Colonic mucosa (tissue), 4 donors: ENCODE measurements at regions of chr2 and their contacts with region 1.

Region 1: DNA sequence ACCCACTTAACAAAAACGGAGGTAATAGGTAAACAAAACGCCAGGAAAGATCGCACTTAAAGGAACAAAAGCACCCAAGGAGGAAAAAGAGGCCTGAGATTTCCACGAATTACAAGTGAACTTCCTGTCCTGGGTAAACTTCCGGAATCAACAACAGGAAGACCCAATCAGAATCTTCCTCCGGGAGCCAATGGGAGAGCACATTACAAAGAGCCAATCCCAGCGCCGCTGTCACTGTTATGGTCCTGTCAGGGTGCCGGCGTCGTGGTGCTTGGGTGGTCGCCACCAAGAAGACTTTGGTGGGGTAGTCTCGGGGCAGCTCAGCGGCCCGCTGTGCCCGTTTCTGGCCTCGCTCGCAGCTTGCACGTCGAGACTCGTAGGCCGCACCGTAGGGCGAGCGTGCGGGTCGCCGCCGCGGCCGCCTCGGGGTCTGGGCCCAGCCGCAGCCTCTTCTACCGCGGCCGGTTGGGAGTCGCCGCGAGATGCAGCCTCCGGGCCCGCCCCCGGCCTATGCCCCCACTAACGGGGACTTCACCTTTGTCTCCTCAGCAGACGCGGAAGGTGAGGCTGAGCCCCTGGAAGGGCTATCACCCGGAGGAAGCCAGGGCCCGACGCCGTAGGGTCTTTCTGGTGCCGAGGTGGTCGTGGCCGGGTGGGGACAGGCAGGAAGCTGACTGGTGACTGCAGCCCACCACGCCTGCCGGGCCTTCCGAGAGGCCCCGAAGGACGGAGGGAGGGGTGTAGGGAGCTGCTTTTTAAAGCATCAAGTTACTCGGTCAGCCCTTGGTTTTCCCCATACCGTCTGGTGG is at the start of gene YIPF4:
- DNase-seq: peak; percentile 93
- H3K4me3 ChIP-seq: peak within 1 kb of the TSS; percentile 86
- H3K27ac ChIP-seq: peak within 1 kb of the TSS; percentile 78
- H3K4me1 ChIP-seq: no peaks in the 10 kb centered on the region
- H3K27me3 ChIP-seq: no peaks in the 10 kb centered on the region
- CTCF ChIP-seq: no peak
- total RNA-seq, gene YIPF4: 47.3 to 82.8 TPM

Region 2: GRCh38 chr2:32168513-32168912 is 109.4 kb before region 1 on chr2:
- intact Hi-C with region 1: loop called (anchors 10 kb)
- DNase-seq: no peak
- H3K4me3 ChIP-seq: no peak overlapping the region
- H3K27ac ChIP-seq: no peak overlapping the region
- H3K4me1 ChIP-seq: peaks cover 5% of the 10 kb centered on the region
- H3K27me3 ChIP-seq: no peaks in the 10 kb centered on the region
- CTCF ChIP-seq: no peak

Region 3: GRCh38 chr2:32375228-32375892 is 97.5 kb after region 1 on chr2:
- intact Hi-C with region 1: no loop called
- DNase-seq: no peak
- H3K4me3 ChIP-seq: no peak overlapping the region
- H3K27ac ChIP-seq: no peak overlapping the region
- H3K4me1 ChIP-seq: no peaks in the 10 kb centered on the region
- H3K27me3 ChIP-seq: no peaks in the 10 kb centered on the region
- CTCF ChIP-seq: no peak

Region 4: GRCh38 chr2:32402091-32402490 is 124.2 kb after region 1 on chr2:
- intact Hi-C with region 1: no loop called
- DNase-seq: no peak
- H3K4me3 ChIP-seq: no peak overlapping the region
- H3K27ac ChIP-seq: no peak overlapping the region
- H3K4me1 ChIP-seq: no peaks in the 10 kb centered on the region
- H3K27me3 ChIP-seq: no peaks in the 10 kb centered on the region
- CTCF ChIP-seq: no peak